HepG2 (cell line): ENCODE measurements at regions of chr1 and their contacts with region 1.

Region 1: GRCh38 chr1:156767101-156767878 is at the start of gene PRCC:
- DNase-seq: peak; percentile 99
- ATAC-seq: peak; percentile 96
- H3K4me3 ChIP-seq: peak within 1 kb of the TSS; percentile 85 to 100 (median 92)
- H3K27ac ChIP-seq: peak within 1 kb of the TSS; percentile 84
- H3K4me1 ChIP-seq: peaks cover 49% of the 10 kb centered on the region
- H3K27me3 ChIP-seq: no peaks in the 10 kb centered on the region; a peak in 1 of 5 replicates
- CTCF ChIP-seq: no peak
- EP300 ChIP-seq: no peak
- POLR2A ChIP-seq: peak; percentile 49 to 73
- RAD21 ChIP-seq: no peak
- total RNA-seq, gene PRCC: 24.2 and 26.8 TPM in 2 replicates

Region 2: GRCh38 chr1:156746728-156747631 is 20.3 kb before region 1 on chr1:
- CTCF ChIA-PET with region 1: no interaction called
- POLR2A ChIA-PET with region 1: interaction called, 125 read pairs
- in situ Hi-C with region 1: no loop called
- intact Hi-C with region 1: loop called (anchors 1 kb)
- DNase-seq: peak; percentile 90
- ATAC-seq: peak; percentile 72
- H3K4me3 ChIP-seq: peak overlapping the region; percentile 87 to 90 (median 88)
- H3K27ac ChIP-seq: peak overlapping the region; percentile 100
- H3K4me1 ChIP-seq: peaks cover 43% of the 10 kb centered on the region
- H3K27me3 ChIP-seq: no peaks in the 10 kb centered on the region; a peak in 1 of 5 replicates
- CTCF ChIP-seq: peak; percentile 51
- EP300 ChIP-seq: peak; percentile 20 to 48; a peak in 2 of 4 replicates
- POLR2A ChIP-seq: peak; percentile 61 to 88
- RAD21 ChIP-seq: peak; percentile 46

Region 3: GRCh38 chr1:156751758-156752757 is 15.2 kb before region 1 on chr1:
- CTCF ChIA-PET with region 1: no interaction called
- POLR2A ChIA-PET with region 1: interaction called, 66 read pairs
- in situ Hi-C with region 1: no loop called
- intact Hi-C with region 1: loop called (anchors 1 kb)
- DNase-seq: peak; percentile 90
- ATAC-seq: peak; percentile 73
- H3K4me3 ChIP-seq: peak overlapping the region; percentile 83 to 90 (median 87)
- H3K27ac ChIP-seq: peak overlapping the region; percentile 100
- H3K4me1 ChIP-seq: peaks cover 37% of the 10 kb centered on the region
- H3K27me3 ChIP-seq: no peaks in the 10 kb centered on the region; a peak in 1 of 5 replicates
- CTCF ChIP-seq: peak; percentile 25; the same call in 1 of the 2 replicates
- EP300 ChIP-seq: peak in 1 of 2 experiments; percentile 28; a peak in 2 of 4 replicates
- POLR2A ChIP-seq: peak in 1 of 2 experiments; percentile 67; a peak in 2 of 4 replicates
- RAD21 ChIP-seq: peak; percentile 34; the same call in 1 of the 2 replicates

Region 4: GRCh38 chr1:157505481-157506272 is 738.4 kb after region 1 on chr1:
- CTCF ChIA-PET with region 1: no interaction called
- POLR2A ChIA-PET with region 1: no interaction called
- in situ Hi-C with region 1: no loop called
- intact Hi-C with region 1: no loop called
- DNase-seq: peak; percentile 57
- ATAC-seq: peak; percentile 100
- H3K4me3 ChIP-seq: no peak overlapping the region
- H3K27ac ChIP-seq: no peak overlapping the region
- H3K4me1 ChIP-seq: no peaks in the 10 kb centered on the region
- H3K27me3 ChIP-seq: peaks cover 0 to 1% of the 10 kb centered on the region in 2 experiments; a peak in 2 of 5 replicates
- CTCF ChIP-seq: peak; percentile 86
- EP300 ChIP-seq: no peak
- POLR2A ChIP-seq: no peak
- RAD21 ChIP-seq: peak; percentile 55